ENCODE measurements at regions of chr6 and their contacts with region 1.

Region 1: DNA sequence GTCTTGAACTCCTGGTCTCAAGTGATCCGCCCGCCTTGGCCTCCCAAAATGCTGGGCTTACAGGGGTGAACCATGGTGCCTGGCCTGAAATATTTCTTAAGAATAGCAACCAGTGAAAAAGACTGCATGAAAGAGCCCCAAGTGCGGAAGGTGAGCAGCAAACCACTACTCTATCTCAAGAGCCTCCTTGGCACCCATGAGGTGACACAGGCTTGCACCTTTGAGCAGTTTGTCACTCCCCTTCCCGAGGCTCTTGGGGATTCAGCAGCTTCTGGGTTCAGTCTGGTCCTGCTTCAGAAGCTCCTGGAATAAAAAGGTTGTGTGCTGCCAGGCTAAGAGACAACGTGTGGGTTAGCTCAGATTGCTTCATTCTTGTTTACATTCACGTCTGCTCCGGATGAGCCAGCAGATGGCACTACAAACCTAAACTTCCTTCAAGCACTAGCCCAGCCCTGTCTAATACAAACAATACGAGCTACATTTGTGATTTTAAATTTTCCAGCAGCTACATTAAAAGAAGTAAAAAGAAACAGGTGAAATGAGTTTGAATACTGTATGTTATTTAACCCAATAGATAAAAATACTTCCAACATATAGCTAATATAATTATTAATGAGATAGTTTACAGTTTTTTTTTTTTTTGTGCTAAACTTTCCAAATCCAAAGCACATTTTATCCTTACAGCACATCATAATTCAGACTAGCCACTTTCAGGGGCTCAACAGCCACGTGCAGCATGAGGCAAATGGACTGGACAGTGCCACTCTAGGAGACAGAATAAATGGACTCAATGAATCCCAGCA is 46.2 kb downstream of the GJA10 start:
- DNase-seq: peak; percentile 64 to 74
- H3K4me3 ChIP-seq: no peak overlapping the region
- H3K27ac ChIP-seq: no peak overlapping the region
- H3K4me1 ChIP-seq: peaks cover 5 to 6% of the 10 kb centered on the region in 2 donors
- H3K27me3 ChIP-seq: no peaks in the 10 kb centered on the region
- CTCF ChIP-seq: peak in 5 of 6 experiments; percentile 16 to 72 (median 68)
- POLR2A ChIP-seq: no peak

Region 2: DNA sequence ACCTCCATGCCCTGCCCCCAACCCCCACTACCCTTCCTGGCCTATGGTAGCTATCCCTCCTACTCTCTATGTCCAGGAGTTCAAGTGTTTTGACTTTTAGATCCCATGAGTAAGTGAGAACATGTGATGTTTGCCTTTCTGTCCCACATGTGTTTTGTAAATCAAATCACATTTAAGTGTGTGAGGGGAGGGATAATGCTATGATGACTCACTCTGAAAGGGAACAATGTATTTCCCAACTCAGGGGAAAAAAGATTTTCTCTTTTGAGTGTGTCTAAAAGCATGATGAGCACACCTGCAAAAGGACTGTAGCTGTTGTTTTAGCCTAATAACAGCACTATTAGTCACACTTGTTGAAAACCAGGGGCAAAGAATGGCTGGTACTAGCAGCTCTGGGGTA is 147.6 kb after region 1 on chr6:
- intact Hi-C with region 1: no loop called
- DNase-seq: peak in 1 of 2 donors; percentile 5
- H3K4me3 ChIP-seq: no peak overlapping the region
- H3K27ac ChIP-seq: no peak overlapping the region
- H3K4me1 ChIP-seq: no peaks in the 10 kb centered on the region
- H3K27me3 ChIP-seq: no peaks in the 10 kb centered on the region
- CTCF ChIP-seq: no peak
- POLR2A ChIP-seq: no peak

Region 3: GRCh38 chr6:90480666-90481065 is 540.2 kb after region 1 on chr6:
- intact Hi-C with region 1: loop called (anchors 2 kb)
- DNase-seq: no peak
- H3K4me3 ChIP-seq: no peak overlapping the region
- H3K27ac ChIP-seq: no peak overlapping the region
- H3K4me1 ChIP-seq: peaks cover 0 to 5% of the 10 kb centered on the region in 2 donors
- H3K27me3 ChIP-seq: no peaks in the 10 kb centered on the region
- CTCF ChIP-seq: no peak
- POLR2A ChIP-seq: no peak

Measured in thyroid gland (tissue), 4 donors.